Posterior cingulate gyrus (tissue), 11 donors: ENCODE measurements at regions of chr14 and their contacts with region 1.

Region 1: DNA sequence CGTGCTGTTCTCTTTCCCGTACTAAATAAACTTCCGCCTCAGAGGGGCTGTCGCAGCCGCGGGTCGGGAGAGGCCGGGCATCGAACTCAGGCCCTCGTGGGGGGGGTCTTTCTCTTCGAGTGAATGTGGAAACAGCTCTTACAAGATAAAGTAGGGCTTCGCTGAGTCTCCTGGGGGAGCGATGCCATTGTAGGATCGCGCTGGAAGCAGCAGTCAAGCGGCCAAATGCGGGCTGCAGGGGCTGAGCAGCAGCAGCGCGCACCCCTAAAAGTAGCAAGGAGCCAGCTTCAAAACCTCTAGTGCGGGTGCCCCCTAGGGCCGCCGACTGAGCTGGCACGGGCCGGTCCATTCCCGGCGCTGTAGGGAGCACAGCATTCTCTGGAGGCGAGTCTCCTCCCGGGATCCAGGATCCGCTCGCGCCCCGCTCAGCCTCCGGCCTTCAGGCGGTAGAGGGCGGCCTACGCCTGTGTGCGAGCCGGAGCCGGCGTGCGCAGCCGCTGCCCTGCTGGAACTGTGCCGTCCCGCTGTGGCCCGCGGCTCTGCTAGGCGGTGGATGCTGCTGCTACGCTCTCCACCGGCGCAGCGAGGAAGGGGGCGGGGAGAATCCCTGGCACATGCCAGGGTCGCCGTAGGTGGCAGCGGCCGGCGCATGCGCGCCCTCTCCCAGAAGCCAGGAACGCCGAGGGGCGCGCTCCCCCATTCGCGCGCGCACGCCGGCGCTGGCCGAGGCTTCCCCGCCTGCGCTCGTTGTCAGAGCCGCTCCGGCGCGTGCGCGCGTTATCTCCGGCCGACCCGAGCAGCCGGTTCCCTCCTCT is at the start of gene FUT8:
- DNase-seq: peak; percentile 91 to 99 (median 94)

Region 2: GRCh38 chr14:65102441-65103149 is 309.6 kb before region 1 on chr14 and contains the start of gene MAX:
- intact Hi-C with region 1: loop called (anchors 5 kb)
- DNase-seq: peak; percentile 98 to 100 (median 99)

Region 3: DNA sequence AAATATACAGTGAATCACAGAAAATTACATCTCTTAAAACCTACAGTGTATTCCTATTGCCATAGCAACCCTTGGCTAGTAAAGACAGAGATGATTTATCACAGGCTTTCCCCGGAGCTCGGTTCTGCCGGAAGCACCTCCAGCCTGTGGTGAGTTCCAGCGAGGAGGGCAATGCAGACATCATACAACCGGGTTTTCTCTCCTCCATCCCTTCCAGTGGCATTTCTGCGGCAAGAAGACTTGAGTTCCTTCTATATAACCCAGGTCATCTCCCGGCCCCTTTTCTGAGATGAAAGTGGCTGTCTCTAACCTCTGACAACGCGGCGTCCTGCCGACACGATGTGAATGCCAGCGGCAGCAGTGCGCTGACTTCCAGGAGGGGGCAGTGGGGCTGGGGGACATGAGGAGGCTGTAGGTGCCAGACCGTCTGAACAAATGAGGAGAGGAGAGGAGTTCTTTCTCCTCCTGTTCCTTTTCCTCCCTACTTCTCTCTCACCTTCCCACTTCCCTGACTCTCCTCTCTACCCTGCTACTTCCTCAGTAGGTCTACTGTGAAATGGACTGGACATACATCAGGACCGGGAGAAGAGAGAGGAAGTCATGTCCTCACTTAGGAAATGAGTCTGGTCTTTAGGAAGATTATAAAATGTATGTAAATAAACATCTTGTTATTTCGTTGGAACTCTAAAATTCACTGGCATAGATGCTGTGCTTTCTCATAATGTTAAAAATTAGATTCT is 241.3 kb before region 1 on chr14:
- intact Hi-C with region 1: loop called (anchors 2 kb)
- DNase-seq: peak in 9 of 10 donors; percentile 25 to 94 (median 63)

Region 4: DNA sequence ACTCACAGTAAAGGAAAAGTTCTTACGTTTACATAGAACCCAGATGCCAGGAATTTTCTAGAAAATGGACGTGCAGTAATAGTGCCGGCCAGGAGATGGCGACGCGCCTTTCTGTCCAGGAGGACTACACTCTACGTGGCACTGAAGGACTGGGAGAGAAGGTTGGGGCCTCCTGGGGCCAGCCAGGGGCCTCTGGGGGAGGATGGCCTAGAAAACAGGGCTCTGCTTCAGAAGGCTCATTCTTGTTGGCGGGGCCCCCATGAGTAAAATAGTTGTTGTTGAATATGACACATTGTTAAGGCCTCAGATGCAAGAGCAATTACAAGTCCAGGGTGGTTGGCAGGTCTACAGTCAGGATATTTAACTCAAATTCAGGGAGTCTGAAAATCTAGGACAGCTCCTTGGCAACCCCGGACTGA is 189.8 kb before region 1 on chr14:
- intact Hi-C with region 1: loop called (anchors 5 kb)
- DNase-seq: peak; percentile 48 to 92 (median 58)

Region 5: GRCh38 chr14:65267856-65268255 is 144.4 kb before region 1 on chr14:
- intact Hi-C with region 1: no loop called
- DNase-seq: no peak

Region 6: DNA sequence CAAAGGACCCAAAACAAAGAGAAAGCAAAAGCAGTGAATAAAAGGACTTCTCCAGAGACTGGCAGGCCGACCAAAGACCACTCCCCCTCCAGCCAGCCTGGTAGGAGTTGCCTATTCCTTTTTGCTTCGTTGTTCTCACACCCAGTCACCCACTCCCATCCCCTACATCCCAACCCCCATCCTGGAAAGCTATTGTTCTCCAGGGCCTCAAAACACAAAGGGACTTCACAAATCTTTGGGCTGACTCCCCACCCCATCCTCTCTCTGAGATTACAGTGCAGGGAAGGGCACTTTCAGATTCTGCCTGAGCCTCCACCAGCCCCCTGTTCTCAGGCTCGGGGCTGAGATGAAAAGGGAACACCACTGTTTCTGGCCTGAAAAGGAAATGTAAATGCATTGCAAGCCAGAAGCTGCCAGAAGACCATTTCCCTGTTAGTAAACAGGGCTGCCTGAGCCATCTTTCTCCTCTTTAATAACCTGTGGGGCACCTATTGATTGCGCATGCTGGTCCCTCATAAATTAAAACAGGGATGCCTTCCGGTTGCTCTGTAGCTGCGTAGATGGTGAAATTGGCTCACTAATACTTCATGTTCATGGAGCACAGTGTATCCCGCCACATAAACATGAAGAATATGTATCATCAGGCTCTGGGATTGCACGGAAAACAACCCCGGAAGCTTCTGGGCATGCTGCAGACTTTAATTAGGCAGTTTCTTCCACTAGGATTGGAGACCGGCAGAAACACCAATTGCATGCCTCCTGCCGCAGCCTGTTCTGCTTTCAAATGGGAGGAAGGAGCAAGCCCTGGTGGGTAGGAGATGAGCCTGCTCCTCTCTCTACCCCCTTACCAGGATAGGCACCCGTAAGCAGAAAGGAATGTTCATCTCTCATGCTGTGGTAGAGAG is 130.0 kb before region 1 on chr14:
- intact Hi-C with region 1: loop called (anchors 2 kb)
- DNase-seq: peak in 8 of 10 donors; percentile 61 to 95 (median 73)

Region 7: GRCh38 chr14:65824285-65824977 is 412.2 kb after region 1 on chr14:
- intact Hi-C with region 1: loop called (anchors 2 kb)
- DNase-seq: peak in 5 of 10 donors; percentile 46 to 86 (median 53)

Region 8: DNA sequence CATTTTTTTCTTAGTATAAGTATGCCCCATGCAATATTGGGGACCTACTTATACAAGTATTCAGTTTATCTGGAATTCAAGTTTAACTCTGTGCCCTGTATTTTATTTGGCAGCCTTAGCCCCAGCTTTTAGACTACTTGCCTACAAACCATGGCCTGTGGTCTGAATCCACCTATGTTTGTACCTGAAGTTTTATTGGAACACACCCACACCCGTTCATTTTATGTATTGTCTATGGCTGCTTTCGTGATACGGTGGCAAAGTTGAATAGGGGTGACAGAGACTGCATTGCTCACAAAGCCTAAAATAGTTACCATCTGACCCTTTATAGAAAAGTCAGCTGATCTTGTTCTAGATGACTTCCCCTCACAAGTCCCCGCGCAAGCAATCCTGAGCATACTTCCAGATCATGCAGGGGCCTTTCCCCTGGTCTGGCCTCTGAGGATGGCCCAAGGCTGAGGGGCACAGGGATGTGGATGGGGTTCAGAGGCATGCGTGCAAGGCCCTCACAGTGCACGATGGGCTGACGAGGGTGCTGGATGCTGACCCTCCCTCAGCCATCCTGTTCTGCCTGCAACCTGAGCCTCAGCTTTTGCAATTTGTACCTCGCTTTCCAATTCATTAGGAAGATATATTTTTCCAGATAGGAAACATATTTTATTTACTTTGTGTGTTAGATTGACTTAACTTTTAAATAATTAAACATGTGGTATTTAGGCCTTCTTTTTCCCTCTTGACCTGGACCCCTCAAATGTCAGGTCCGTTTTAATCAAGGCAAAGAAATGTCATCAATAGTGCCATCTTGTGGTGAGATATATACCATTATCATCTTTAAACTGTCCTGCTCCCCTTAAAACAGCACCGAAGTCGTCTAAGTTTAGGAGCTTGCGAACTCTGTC is 546.7 kb after region 1 on chr14:
- intact Hi-C with region 1: loop called (anchors 5 kb)
- DNase-seq: no peak